ENCODE measurements at regions of chr10 and their contacts with region 1.

Region 1: GRCh38 chr10:62038609-62039190 is 137.2 kb downstream of the ARID5B start:
- DNase-seq: peak; percentile 83
- H3K4me3 Mint-ChIP-seq: peak overlapping the region; percentile 54
- H3K27ac Mint-ChIP-seq: peak overlapping the region; percentile 74
- H3K4me1 Mint-ChIP-seq: peaks cover 72% of the 10 kb centered on the region
- H3K27me3 Mint-ChIP-seq: no peaks in the 10 kb centered on the region

Region 2: DNA sequence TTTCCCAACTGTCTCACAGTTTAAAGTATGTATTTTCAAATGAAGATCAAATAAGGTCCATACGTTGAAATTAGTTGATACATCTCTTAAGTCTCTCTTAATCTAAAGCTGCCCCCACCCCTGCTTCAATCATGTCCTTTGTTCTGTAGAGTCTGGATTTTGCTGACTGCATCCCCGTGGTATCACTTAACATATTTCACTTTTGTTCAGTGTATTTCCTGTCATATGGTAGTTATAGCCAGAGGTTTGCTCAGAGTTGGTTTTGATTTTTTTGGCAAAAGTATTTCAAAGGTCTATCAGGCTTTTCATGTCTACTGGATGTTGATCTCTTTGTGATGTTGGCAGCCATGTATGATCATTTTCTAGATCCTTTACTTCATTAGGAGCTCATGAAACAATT is 191.6 kb before region 1 on chr10:
- CTCF ChIA-PET with region 1: no interaction called
- POLR2A ChIA-PET with region 1: no interaction called
- DNase-seq: no peak
- H3K4me3 Mint-ChIP-seq: no peak overlapping the region
- H3K27ac Mint-ChIP-seq: no peak overlapping the region
- H3K4me1 Mint-ChIP-seq: peaks cover 14% of the 10 kb centered on the region
- H3K27me3 Mint-ChIP-seq: no peaks in the 10 kb centered on the region

Region 3: GRCh38 chr10:61987951-61988379 is 50.7 kb before region 1 on chr10:
- CTCF ChIA-PET with region 1: interaction called, 15 read pairs
- POLR2A ChIA-PET with region 1: interaction called, 20 read pairs
- DNase-seq: peak; percentile 30
- H3K4me3 Mint-ChIP-seq: peak overlapping the region; percentile 66
- H3K27ac Mint-ChIP-seq: peak overlapping the region; percentile 98
- H3K4me1 Mint-ChIP-seq: peaks cover 82% of the 10 kb centered on the region
- H3K27me3 Mint-ChIP-seq: no peaks in the 10 kb centered on the region

Region 4: GRCh38 chr10:62019013-62019684 is 19.6 kb before region 1 on chr10:
- CTCF ChIA-PET with region 1: interaction called, 21 read pairs
- POLR2A ChIA-PET with region 1: interaction called, 15 read pairs
- DNase-seq: no peak
- H3K4me3 Mint-ChIP-seq: no peak overlapping the region
- H3K27ac Mint-ChIP-seq: peak overlapping the region; percentile 71
- H3K4me1 Mint-ChIP-seq: peaks cover 77% of the 10 kb centered on the region
- H3K27me3 Mint-ChIP-seq: no peaks in the 10 kb centered on the region

Region 5: GRCh38 chr10:62082729-62083411 is 44.2 kb after region 1 on chr10:
- CTCF ChIA-PET with region 1: interaction called, 9 read pairs
- POLR2A ChIA-PET with region 1: interaction called, 18 read pairs
- DNase-seq: peak; percentile 69
- H3K4me3 Mint-ChIP-seq: peak overlapping the region; percentile 61
- H3K27ac Mint-ChIP-seq: peak overlapping the region; percentile 92
- H3K4me1 Mint-ChIP-seq: peaks cover 81% of the 10 kb centered on the region
- H3K27me3 Mint-ChIP-seq: no peaks in the 10 kb centered on the region

Region 6: GRCh38 chr10:62244780-62245467 is 206.2 kb after region 1 on chr10:
- CTCF ChIA-PET with region 1: interaction called, 204 read pairs
- POLR2A ChIA-PET with region 1: interaction called, 67 read pairs
- DNase-seq: peak; percentile 59
- H3K4me3 Mint-ChIP-seq: peak overlapping the region; percentile 52
- H3K27ac Mint-ChIP-seq: peak overlapping the region; percentile 65
- H3K4me1 Mint-ChIP-seq: peaks cover 38% of the 10 kb centered on the region
- H3K27me3 Mint-ChIP-seq: no peaks in the 10 kb centered on the region